Panc1 (cell line): ENCODE measurements at regions of chr15 and their contacts with region 1.

Region 1: GRCh38 chr15:38699633-38700230 is 135.1 kb upstream of the RASGRP1 start:
- DNase-seq: no peak
- ATAC-seq: peak; percentile 87
- H3K4me3 ChIP-seq: no peak overlapping the region
- H3K27ac ChIP-seq: no peak overlapping the region
- H3K4me1 ChIP-seq: no peaks in the 10 kb centered on the region; the same call in none of the 2 replicates
- H3K27me3 ChIP-seq: no peaks in the 10 kb centered on the region
- CTCF ChIP-seq: peak; percentile 92

Region 2: DNA sequence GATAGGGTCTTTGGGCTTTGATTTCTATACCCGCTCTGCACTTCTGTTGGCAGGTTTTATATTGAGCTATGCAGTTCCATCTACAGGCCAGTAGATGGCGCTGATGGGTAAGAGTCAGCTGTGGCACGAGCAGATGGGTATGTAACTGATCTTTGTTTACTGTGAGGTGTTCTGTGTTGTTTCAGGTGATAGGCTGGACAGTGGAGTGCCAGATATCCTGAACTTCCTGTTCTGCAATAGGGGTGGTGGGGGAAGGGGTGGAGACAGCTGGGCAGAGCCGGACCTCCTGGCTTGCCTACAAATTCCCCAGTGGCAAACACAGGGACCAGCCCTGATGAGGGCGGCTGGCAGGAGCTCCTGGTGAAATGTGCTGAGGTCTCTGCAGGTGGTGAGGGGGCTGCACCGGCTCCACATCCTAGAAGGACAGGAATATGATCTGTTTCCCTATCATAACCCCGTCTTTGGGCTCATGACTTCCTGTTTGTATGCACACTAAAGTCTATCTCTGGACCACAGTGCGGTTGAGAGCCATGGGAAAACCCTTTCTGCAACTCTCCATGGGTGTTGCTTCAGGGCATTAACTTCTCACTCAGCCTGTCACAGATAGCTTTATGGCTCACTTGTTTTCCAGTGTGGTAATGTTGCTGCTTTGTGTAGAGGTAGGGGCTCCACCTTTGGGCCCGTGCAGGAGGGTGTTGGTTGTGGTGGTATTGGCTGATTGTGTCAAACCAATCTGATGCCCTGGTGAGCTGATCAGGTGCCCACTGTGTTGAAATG is 259.2 kb before region 1 on chr15:
- CTCF ChIA-PET with region 1: interaction called, 18 read pairs
- POLR2A ChIA-PET with region 1: no interaction called
- in situ Hi-C with region 1: no loop called
- intact Hi-C with region 1: no loop called
- DNase-seq: peak; percentile 38
- ATAC-seq: peak; percentile 90
- H3K4me3 ChIP-seq: no peak overlapping the region
- H3K27ac ChIP-seq: no peak overlapping the region
- H3K4me1 ChIP-seq: no peaks in the 10 kb centered on the region
- H3K27me3 ChIP-seq: no peaks in the 10 kb centered on the region; the same call in 1 of the 2 replicates
- CTCF ChIP-seq: peak; percentile 95

Region 3: GRCh38 chr15:38453971-38454695 is 245.6 kb before region 1 on chr15 and contains the start of gene FAM98B:
- CTCF ChIA-PET with region 1: no interaction called
- POLR2A ChIA-PET with region 1: no interaction called
- in situ Hi-C with region 1: loop called (anchors 25 kb)
- intact Hi-C with region 1: no loop called
- DNase-seq: peak; percentile 55
- ATAC-seq: peak; percentile 99
- H3K4me3 ChIP-seq: peak within 1 kb of the TSS; percentile 93 to 99
- H3K27ac ChIP-seq: peak within 1 kb of the TSS; percentile 96
- H3K4me1 ChIP-seq: peaks cover 7% of the 10 kb centered on the region; the same call in 1 of the 2 replicates
- H3K27me3 ChIP-seq: peaks cover 6% of the 10 kb centered on the region; the same call in 1 of the 2 replicates
- CTCF ChIP-seq: no peak
- total RNA-seq, gene FAM98B: 32.5 TPM

Region 4: DNA sequence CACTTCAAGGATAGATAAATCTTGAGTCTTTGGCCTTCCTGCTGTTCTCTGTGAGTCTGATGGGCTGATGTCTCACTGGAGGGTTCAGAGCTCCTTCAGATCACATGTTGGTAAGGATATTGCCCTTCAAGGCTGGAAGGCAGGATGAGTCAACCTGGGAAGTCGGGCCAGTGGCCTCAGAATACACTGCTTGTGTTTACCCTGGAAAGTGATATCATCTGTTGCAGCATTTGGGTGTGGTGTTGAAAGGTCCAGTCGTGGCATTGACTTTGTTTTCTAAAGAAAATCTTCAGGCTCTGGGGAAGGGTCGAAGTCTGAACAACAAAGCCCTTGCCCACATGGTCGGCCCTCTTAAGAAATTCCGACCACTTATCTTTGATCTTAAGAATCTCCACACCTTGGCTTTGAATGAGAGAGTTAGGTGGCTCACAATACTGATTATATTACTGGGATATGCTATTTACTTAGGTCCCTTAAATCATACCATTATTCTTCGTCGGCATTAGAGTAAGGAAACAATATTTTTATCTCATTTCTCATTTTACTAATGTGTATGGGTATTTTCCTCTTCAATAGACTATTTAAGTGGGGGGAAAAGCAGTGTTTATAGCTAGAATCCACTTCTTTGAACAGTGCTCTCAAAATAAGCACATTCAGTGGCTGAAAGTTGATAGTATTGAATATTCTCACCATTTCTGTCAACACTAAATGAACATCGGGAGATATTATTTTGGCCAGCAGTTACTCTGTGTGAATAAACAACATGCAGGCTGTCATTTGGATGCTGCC is 168.8 kb after region 1 on chr15:
- CTCF ChIA-PET with region 1: no interaction called
- POLR2A ChIA-PET with region 1: no interaction called
- in situ Hi-C with region 1: no loop called
- intact Hi-C with region 1: no loop called
- DNase-seq: peak; percentile 87
- ATAC-seq: peak; percentile 84
- H3K4me3 ChIP-seq: no peak overlapping the region
- H3K27ac ChIP-seq: no peak overlapping the region
- H3K4me1 ChIP-seq: no peaks in the 10 kb centered on the region
- H3K27me3 ChIP-seq: no peaks in the 10 kb centered on the region
- CTCF ChIP-seq: no peak